ENCODE measurements at regions of chr9 and their contacts with region 1.

Region 1: DNA sequence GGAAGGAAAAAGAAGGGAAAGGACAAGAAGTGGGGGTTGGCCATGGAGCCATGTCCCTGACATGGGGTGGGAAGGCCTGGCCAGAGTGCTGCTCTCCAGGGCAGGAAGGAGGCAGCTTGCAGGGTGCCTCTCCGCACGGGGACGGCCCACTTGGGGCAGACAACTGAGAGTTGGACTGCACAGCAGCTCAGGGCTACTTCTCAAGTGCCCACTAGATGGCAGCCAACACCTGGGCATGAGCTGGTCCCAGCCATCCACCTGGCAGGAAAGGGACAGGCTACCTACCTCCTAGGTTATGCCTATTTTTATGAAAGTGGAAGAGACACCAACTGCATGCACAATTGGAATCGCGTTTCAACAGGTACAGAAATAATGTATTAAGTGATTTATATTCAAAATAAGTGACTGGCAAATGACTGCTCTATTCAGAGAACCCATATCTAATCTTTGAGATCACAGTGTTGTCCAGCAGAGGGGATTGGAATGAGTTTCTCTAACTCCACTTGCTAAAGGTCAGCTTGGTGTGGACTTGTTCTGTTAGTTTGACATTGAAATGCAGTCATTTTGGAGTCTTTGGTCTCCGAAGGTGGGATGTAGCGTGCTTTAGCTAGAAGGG is 113.4 kb downstream of the SYK start:
- DNase-seq: peak; percentile 67 to 84
- ATAC-seq: peak; percentile 84 to 96 (median 88)
- H3K4me3 ChIP-seq: no peak overlapping the region
- H3K27ac ChIP-seq: no peak overlapping the region
- H3K4me1 ChIP-seq: peaks cover 8% of the 10 kb centered on the region
- H3K27me3 ChIP-seq: no peaks in the 10 kb centered on the region
- CTCF ChIP-seq: peak; percentile 92

Region 2: DNA sequence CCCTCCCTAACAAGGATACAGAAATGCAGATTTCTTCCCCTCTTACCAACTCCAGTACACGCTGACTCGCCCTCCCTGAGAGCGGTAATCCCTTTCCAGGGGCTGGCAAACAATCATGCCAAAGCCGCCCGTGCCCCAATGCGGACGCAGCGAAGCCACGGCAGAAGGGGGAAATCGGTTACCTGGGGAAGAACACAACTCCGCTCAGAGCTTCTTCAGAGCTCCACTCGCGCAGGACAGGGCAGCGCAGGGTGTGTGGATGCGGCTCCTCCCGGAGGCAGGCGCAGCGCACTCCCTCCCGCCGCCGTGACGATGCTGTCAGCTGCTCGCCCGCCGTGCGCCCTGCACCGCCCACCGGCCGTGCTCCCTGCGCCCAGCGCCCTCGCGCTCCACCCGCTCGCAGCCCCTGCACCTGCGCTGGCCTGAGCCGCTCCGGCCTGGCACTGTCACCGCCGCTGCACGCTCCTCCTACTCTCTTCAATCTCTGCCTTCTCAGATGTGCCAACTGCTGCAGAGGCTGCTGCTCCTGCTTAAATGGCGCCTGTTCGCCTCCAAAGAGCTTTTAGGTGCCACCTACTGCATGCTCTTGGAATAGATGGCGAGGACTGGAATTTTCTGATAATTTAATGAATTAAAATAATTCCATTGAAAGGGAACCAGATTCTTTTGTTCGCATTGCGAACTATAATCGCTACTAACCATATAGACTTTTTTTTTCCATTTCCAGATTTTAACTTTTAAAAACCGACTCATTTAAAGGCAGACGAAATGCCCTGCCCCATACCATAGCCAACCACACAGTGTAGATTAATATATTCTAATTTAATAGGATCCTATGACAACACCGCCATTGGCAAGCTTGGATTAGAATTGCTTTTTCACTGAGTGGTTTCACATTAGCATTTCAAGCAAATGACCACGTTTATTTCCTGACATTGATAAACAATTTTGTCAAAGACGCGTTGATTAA is 272.1 kb before region 1 on chr9 and contains the start of gene DIRAS2:
- intact Hi-C with region 1: no loop called
- DNase-seq: peak; percentile 24 to 55
- ATAC-seq: peak; percentile 78 to 85 (median 82)
- H3K4me3 ChIP-seq: peak within 1 kb of the TSS; percentile 65
- H3K27ac ChIP-seq: no peak within 1 kb of the TSS
- H3K4me1 ChIP-seq: peaks cover 3% of the 10 kb centered on the region
- H3K27me3 ChIP-seq: peaks cover 0 to 29% (median 0%) of the 10 kb centered on the region in 3 donors
- CTCF ChIP-seq: peak; percentile 31
- total RNA-seq, gene DIRAS2: 0.05 TPM in 1 of 4 donors, not detected in the others

Region 3: GRCh38 chr9:91164724-91165520 is 249.9 kb after region 1 on chr9:
- intact Hi-C with region 1: loop called in 1 of 2 experiments (anchors 10 kb)
- DNase-seq: peak; percentile 75 to 79
- ATAC-seq: peak; percentile 32 to 75 (median 72)
- H3K4me3 ChIP-seq: no peak overlapping the region
- H3K27ac ChIP-seq: no peak overlapping the region
- H3K4me1 ChIP-seq: peaks cover 25% of the 10 kb centered on the region
- H3K27me3 ChIP-seq: no peaks in the 10 kb centered on the region
- CTCF ChIP-seq: no peak

Region 4: DNA sequence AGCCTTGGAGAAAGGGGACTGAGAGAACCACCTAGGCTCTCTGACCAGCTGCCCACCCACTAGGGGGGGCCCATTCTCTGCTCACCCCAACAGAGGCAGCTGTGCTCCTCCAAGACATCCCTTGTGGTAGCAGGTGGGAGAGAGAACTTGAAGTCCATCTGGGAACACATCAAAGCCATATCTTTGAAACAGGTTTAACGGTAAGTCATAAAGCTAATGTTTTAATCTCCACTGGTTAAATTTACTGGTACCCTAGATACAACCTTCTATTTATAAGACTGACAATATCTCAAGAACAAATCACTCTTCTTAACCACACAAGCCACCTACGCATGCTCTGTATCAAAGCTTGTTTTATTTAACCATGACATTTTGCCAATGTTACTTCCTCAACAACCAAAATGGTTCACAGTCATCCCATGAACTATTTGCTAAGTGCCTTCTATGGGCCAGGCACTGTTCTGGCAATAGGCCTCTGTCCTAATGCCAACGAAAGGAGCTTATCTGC is 426.3 kb after region 1 on chr9:
- intact Hi-C with region 1: loop called in 1 of 2 experiments (anchors 10 kb)
- DNase-seq: no peak
- ATAC-seq: peak in 3 of 4 donors; percentile 53 to 75 (median 56)
- H3K4me3 ChIP-seq: no peak overlapping the region
- H3K27ac ChIP-seq: no peak overlapping the region
- H3K4me1 ChIP-seq: peaks cover 8% of the 10 kb centered on the region
- H3K27me3 ChIP-seq: no peaks in the 10 kb centered on the region
- CTCF ChIP-seq: no peak

Region 5: DNA sequence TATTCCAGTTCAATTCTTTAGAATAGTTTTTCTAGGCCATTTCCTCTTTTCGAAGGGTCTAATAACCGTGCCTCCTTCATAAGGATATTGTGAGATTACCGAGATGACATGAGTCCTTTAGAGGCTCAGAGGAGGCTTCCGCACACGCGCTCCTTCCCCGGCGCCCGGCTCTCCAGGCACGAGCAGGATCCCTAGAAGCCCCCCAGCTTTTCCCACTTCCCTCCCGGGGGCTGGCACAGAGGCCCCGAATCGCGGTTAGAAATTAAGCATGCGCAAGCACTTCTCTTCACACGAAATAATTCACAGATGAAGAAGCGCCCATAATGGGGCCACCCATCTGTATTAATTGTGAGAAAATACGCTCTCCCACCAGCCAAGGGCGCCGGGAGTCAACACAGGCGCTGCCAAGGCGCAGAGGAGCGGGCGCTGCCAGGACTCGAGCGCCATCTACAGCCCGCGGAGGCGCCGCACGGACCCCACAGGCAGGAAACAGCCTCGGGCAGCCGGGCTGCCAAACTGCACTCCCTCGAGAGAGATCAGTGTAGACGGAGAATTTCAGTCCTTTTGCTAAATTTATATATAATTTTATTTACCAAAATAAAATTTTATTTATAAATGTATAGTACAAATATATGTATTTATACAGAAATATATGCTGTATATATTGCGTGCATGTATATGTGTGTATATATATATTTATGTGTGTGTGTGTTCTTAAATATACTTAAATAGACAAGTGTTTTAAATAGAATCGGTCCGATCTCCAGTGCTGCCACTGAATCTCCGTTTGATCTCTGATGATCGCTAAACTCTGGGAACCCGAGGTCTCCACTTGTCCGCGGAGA is 766.7 kb after region 1 on chr9:
- intact Hi-C with region 1: loop called (anchors 5 kb)
- DNase-seq: peak; percentile 76 to 82
- ATAC-seq: peak; percentile 76 to 99 (median 98)
- H3K4me3 ChIP-seq: peak overlapping the region; percentile 38
- H3K27ac ChIP-seq: no peak overlapping the region
- H3K4me1 ChIP-seq: no peaks in the 10 kb centered on the region
- H3K27me3 ChIP-seq: no peaks in the 10 kb centered on the region
- CTCF ChIP-seq: peak; percentile 77

Region 6: DNA sequence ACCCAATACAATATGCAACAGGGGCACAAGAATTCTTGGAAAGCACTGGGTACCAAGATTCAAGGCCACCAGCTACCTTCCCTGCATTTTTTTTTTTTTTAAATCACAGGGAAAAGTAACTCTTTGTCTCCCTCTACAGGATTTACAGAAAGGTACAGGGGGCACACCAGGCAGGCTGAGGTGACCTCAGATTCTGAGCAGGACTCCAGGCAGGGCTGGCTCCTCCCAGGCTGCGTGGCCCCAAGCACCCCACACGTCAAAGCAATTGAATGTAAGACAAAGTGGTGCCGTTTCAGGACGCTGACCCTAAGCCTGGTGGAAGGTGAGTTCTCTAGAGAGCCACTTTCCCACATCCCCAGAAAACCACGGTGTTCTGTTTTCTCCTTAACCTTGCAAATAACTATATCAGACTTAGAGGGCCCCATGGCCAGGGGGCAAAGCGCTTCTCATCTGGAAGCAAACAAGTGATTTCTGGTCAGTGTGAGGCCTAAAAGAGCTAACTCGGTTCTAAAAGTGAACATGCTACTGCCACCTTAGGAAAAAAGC is 812.4 kb after region 1 on chr9:
- intact Hi-C with region 1: loop called (anchors 1 to 5 kb)
- DNase-seq: no peak
- ATAC-seq: peak; percentile 53 to 75 (median 68)
- H3K4me3 ChIP-seq: no peak overlapping the region
- H3K27ac ChIP-seq: no peak overlapping the region
- H3K4me1 ChIP-seq: no peaks in the 10 kb centered on the region
- H3K27me3 ChIP-seq: peaks cover 0 to 1% (median 0%) of the 10 kb centered on the region in 3 donors
- CTCF ChIP-seq: peak; percentile 60

Measured in psoas muscle (tissue), 8 donors.